ENCODE measurements at regions of chr9 and their contacts with region 1.

Region 1: GRCh38 chr9:107637421-107638420 is 148.2 kb upstream of the KLF4 start:
- DNase-seq: peak; percentile 95 to 96 (median 96)
- ATAC-seq: peak; percentile 94 to 96
- H3K4me3 ChIP-seq: peak overlapping the region; percentile 67
- H3K27ac ChIP-seq: peak overlapping the region; percentile 97
- H3K4me1 ChIP-seq: no peaks in the 10 kb centered on the region
- H3K27me3 ChIP-seq: no peaks in the 10 kb centered on the region

Region 2: GRCh38 chr9:107732781-107733522 is 95.2 kb after region 1 on chr9:
- intact Hi-C with region 1: loop called in 2 of 4 experiments (anchors 10 kb)
- DNase-seq: peak; percentile 49 to 74 (median 72)
- ATAC-seq: peak; percentile 72 to 75
- H3K4me3 ChIP-seq: peak overlapping the region; percentile 13
- H3K27ac ChIP-seq: peak overlapping the region; percentile 99
- H3K4me1 ChIP-seq: peaks cover 8% of the 10 kb centered on the region
- H3K27me3 ChIP-seq: no peaks in the 10 kb centered on the region

Region 3: GRCh38 chr9:107749787-107750444 is 112.2 kb after region 1 on chr9:
- intact Hi-C with region 1: loop called in 2 of 4 experiments (anchors 5 to 10 kb)
- DNase-seq: peak; percentile 93 to 97 (median 93)
- ATAC-seq: peak; percentile 94 to 95
- H3K4me3 ChIP-seq: no peak overlapping the region
- H3K27ac ChIP-seq: peak overlapping the region; percentile 95
- H3K4me1 ChIP-seq: peaks cover 9% of the 10 kb centered on the region
- H3K27me3 ChIP-seq: no peaks in the 10 kb centered on the region

Region 4: DNA sequence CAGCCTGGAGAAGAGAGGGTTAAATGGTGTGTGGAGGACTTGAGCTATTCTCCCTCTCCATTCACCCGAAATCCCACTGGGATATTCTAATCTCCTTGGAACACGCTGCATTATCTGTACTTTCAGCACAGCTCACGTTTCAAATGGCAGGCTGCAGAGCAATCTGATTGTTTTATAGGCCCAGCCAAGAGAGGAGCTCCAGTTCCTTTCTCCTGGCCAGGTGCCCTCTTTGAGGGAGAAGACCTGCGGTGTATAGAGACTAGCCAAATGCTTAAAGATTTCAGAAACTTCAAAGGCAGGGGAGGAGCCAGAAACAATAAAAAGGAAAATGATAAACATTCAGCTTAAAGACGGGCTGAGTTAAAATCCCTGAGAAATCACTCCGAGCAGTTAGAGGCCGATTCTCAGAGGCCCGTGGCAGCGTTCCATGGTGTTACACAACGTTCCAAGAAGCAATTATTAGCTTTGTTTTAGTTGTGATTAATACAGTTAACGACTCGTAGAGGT is 415.9 kb after region 1 on chr9:
- intact Hi-C with region 1: loop called in 1 of 4 experiments (anchors 10 kb)
- DNase-seq: peak; percentile 79 to 93 (median 82)
- ATAC-seq: peak; percentile 78 to 85
- H3K4me3 ChIP-seq: no peak overlapping the region
- H3K27ac ChIP-seq: peak overlapping the region; percentile 66
- H3K4me1 ChIP-seq: peaks cover 8% of the 10 kb centered on the region
- H3K27me3 ChIP-seq: no peaks in the 10 kb centered on the region

Measured in right cardiac atrium (tissue), 5 donors.